GM10248 (cell line): ENCODE measurements at regions of chr20 and their contacts with region 1.

Region 1: DNA sequence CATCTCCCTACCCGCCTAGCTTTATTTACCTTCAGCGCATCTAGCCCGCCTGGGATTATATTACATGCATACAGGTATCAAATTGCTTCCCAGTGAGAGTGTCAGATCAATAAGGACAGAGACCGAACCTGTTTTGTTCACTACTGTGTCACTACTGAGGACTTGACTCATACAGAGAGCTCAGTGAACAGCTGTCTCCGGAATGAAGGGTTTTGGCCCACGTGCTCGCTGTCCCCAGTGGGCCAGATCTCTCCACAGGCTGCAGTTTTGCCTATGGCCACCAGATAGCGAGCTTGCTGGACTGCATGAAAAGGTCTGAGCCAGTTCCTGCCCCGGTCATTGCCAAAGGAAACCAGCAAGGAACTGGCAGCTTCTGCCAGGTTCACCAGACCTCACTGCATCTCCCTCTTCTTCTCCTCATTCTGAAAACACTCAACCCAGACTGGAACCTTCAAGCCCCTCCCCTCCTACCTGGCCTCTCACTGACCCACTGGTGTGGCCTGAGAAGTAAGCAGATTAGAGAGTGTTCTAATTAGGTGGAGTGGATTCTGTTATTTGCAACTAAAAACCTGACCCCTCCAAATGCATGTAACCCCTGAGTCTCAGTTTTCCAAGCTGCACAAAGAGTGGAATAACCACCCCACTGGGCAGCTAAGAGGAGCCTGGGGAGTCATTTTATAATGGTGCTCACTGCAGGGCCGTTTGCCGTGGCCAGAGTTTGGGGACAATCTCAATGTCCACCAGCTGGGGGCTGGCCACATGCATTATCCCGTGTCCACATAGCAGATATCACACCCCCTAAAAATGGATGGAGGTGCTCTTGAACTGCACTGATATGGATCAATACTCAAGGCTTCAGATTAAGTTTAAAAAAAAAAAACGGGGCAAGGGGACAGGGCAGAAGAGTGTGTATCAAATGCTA is 150.7 kb downstream of the ZMYND8 start:
- DNase-seq: peak; percentile 70
- CTCF ChIP-seq: peak; percentile 59

Region 2: GRCh38 chr20:47173596-47174216 is 32.1 kb before region 1 on chr20:
- CTCF ChIA-PET with region 1: no interaction called
- POLR2A ChIA-PET with region 1: no interaction called
- DNase-seq: no peak
- CTCF ChIP-seq: no peak

Region 3: DNA sequence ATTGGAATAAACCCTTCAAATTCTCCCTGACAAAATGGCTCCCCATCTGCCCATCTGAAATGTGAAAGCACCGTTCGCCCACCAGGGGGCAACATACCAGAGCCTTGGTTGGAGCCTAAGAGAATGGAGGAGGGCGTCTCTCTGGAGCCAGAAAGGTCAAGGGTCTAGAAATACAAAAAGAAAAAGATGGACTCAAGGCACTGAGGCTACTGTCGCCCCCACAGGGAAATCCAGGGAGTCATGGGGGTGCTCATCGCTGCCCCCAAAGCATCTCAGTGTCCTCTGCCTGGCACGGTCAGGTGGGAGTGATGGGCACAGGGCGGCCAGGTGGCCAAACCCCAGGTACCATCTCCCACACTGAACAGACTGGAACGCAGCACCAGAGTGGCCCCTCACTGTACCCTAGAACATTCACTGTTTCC is 14.3 kb after region 1 on chr20:
- CTCF ChIA-PET with region 1: interaction called, 15 read pairs
- POLR2A ChIA-PET with region 1: no interaction called
- DNase-seq: peak; percentile 54
- CTCF ChIP-seq: peak; percentile 29

Region 4: GRCh38 chr20:47231382-47232039 is 25.7 kb after region 1 on chr20:
- CTCF ChIA-PET with region 1: interaction called, 11 read pairs
- POLR2A ChIA-PET with region 1: no interaction called
- DNase-seq: no peak
- CTCF ChIP-seq: no peak